Pancreas (tissue), 10 donors: ENCODE measurements at regions of chrX and their contacts with region 1.

Region 1: GRCh38 chrX:19544693-19545305 is 29.5 kb upstream of the MAP3K15 start:
- DNase-seq: peak in 3 of 6 donors; percentile 22 to 47 (median 36)
- ATAC-seq: peak; percentile 43 to 89 (median 86)
- H3K4me3 ChIP-seq: no peak overlapping the region
- H3K27ac ChIP-seq: no peak overlapping the region
- H3K4me1 ChIP-seq: no peaks in the 10 kb centered on the region
- H3K27me3 ChIP-seq: peaks cover 0 to 9% (median 4%) of the 10 kb centered on the region in 4 donors
- CTCF ChIP-seq: peak; percentile 53 to 77 (median 64)

Region 2: GRCh38 chrX:19133231-19133630 is 411.6 kb before region 1 on chrX:
- intact Hi-C with region 1: no loop called
- DNase-seq: no peak
- ATAC-seq: no peak
- H3K4me3 ChIP-seq: no peak overlapping the region
- H3K27ac ChIP-seq: no peak overlapping the region
- H3K4me1 ChIP-seq: no peaks in the 10 kb centered on the region
- H3K27me3 ChIP-seq: peaks cover 0 to 7% (median 0%) of the 10 kb centered on the region in 4 donors
- CTCF ChIP-seq: no peak

Region 3: DNA sequence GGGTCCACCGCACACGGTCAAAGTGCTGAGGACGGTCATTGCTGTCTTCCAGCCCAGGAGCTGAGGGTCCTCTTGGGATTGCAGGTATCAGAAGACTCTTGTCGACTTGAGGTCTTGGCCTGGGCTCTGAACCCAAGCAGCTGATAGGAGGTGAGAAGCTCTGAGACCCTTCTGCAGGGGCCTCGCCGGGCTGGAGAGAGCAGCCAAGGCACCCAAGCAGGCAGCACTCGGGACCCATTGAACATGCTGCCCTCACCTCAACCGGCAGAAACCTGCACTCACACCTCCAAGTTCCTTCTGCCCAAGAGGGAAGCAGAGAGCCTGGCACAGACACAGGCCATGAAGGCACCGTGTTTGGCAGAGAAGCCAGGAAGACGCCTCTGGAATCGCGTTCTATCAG is 167.0 kb before region 1 on chrX:
- intact Hi-C with region 1: loop called in 2 of 3 experiments (anchors 5 to 10 kb)
- DNase-seq: no peak
- ATAC-seq: no peak
- H3K4me3 ChIP-seq: no peak overlapping the region
- H3K27ac ChIP-seq: no peak overlapping the region
- H3K4me1 ChIP-seq: no peaks in the 10 kb centered on the region
- H3K27me3 ChIP-seq: no peaks in the 10 kb centered on the region
- CTCF ChIP-seq: no peak

Region 4: DNA sequence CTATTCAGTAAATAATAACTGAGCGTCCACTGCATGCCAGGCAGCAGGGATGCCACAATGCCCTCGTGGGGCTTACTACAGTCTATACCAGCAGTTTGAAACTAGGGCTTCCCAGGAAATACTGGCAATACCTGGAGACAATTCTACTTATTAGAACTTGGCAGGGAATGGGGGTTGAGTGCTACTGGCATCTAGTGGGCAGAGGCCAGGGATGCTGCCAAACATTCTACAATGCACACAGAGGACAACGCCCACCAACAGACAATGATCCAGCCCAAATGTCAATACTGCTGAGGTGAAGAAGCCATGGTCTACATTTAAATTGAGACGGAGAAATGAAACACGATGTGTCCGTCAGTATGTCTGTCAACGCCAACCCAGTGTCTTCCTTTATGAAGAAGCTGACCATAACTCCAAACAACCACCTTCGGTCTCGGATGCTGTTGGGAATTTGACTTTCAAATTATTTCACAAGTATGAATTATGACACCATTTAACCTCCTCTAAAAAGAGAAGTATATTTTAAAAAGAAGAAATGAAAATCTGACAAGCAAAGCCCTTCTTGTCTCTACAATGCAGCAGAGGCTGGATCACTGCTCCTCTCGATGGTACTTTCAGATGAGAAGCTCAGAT is 94.1 kb after region 1 on chrX:
- intact Hi-C with region 1: no loop called
- DNase-seq: no peak
- ATAC-seq: no peak
- H3K4me3 ChIP-seq: no peak overlapping the region
- H3K27ac ChIP-seq: no peak overlapping the region
- H3K4me1 ChIP-seq: no peaks in the 10 kb centered on the region
- H3K27me3 ChIP-seq: peaks cover 0 to 9% (median 0%) of the 10 kb centered on the region in 4 donors
- CTCF ChIP-seq: no peak